ENCODE measurements at regions of chr1 and their contacts with region 1.

Region 1: DNA sequence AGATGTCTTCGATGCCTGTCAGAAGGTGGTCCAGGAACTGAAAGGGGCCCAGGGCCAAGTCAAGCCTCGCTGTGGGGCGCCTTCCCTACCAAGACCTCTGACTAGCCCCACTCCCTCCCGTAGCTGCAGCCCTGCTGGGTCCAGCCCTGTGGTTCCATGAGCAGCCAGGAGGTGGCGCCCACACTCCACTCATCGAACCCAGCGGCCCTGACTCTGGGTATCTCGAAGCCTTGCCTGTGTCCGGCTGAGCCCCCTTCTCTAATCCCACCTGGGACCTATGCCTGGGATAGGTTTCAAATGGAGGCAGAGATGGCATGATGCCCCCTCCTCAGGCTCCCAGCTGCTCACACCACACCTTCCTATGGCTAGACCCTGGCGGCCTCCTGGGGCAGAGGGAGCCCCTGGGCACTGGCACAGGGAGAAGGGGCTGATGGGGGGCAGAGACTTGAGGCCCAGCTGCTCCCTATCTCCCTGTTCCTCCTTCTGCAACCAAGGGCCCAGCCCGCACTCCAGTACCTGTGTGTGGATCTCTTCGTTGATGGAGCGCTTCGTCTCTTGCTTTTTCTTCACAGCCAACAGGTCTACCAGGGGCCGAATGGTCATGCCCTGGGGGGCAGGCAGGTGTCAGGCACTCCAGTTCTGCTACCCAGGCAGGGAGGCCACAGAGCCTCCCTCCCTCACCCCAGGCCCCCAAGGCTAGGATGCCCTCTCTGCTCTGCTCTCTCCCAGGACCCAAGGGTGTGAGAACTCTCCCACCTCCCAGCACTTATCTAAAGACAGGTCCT is 52.0 kb downstream of the SLC9A1 start:
- DNase-seq: peak; percentile 88
- CTCF ChIP-seq: peak; percentile 98

Region 2: GRCh38 chr1:26482921-26483680 is 619.8 kb before region 1 on chr1:
- in situ Hi-C with region 1: no loop called
- DNase-seq: no peak
- CTCF ChIP-seq: no peak

Region 3: DNA sequence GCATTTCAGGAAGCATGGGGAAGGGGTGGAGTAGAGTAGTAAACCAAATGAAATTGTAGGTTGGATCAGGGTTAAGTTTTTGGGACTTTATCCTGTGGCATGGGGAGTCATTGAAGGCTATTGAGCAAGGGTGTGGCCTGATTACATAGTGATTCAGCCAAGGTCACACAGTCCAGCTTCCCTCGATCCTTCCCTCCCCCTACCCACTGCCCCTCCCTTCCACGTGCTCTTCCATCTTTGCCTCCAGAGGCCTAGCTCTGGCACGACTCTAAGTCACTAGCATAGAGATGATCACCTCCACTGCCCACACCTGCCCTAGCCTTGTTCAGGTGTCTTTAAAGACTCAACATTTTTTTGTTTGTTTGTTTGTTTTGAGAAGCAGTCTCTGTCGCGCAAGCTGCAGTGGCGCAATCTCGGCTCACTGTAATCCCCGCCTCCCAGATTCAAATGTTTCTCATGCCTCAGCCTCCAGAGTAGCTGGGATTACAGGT is 89.2 kb after region 1 on chr1:
- in situ Hi-C with region 1: loop called (anchors 10 kb)
- DNase-seq: no peak
- CTCF ChIP-seq: no peak

Region 4: GRCh38 chr1:27284425-27285273 is 181.8 kb after region 1 on chr1:
- in situ Hi-C with region 1: loop called (anchors 5 kb)
- DNase-seq: peak; percentile 89
- CTCF ChIP-seq: peak; percentile 87

Region 5: DNA sequence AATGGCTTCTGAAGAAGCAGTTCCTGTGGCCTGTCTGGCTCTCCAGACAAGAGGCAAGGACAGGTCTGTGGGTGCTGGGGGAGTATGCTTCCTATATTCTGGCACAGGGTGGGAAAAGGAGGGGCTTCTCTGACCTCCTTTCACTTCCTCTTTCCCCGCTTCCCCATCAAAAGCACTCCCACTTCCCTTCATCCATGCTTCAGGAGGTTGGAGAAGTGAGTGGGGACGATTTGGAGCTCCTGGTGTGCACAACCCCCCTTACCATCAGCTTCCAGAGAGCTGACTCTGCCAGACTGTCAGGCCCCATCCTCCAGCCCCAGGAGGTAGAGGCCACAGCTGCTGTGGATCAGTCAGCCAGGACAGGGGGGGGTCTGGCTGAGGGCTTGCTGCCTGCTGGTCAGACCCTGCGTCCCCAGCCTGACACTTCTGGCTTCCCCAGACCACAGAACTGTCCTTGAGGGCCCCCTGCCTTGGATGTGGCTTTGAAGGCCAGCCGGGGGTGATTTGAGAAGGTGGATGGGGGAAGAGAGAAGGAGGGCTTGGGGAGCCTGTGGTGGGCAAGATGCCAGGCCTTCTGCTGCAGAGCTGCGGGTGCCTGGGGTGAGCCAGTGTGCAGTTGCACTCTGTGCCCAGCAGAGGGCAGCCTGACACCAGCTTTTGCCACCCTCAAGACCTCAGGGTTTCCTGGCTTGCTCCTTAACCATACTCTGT is 197.6 kb after region 1 on chr1:
- in situ Hi-C with region 1: no loop called
- DNase-seq: peak; percentile 92
- CTCF ChIP-seq: peak; percentile 99